Colonic mucosa (tissue), 4 donors: ENCODE measurements at regions of chr2 and their contacts with region 1.

Region 1: GRCh38 chr2:39513641-39514094 is 76.6 kb upstream of the MAP4K3 start:
- DNase-seq: peak; percentile 67
- H3K4me3 ChIP-seq: no peak overlapping the region
- H3K27ac ChIP-seq: peak overlapping the region; percentile 4
- H3K4me1 ChIP-seq: no peaks in the 10 kb centered on the region
- H3K27me3 ChIP-seq: no peaks in the 10 kb centered on the region
- CTCF ChIP-seq: peak; percentile 32

Region 2: GRCh38 chr2:39350658-39351057 is 163.0 kb before region 1 on chr2:
- intact Hi-C with region 1: no loop called
- DNase-seq: no peak
- H3K4me3 ChIP-seq: no peak overlapping the region
- H3K27ac ChIP-seq: no peak overlapping the region
- H3K4me1 ChIP-seq: no peaks in the 10 kb centered on the region
- H3K27me3 ChIP-seq: no peaks in the 10 kb centered on the region
- CTCF ChIP-seq: no peak

Region 3: GRCh38 chr2:39436592-39437510 is 76.8 kb before region 1 on chr2 and contains the start of gene MAP4K3:
- intact Hi-C with region 1: loop called (anchors 10 kb)
- DNase-seq: peak; percentile 95
- H3K4me3 ChIP-seq: peak within 1 kb of the TSS; percentile 84
- H3K27ac ChIP-seq: peak within 1 kb of the TSS; percentile 92
- H3K4me1 ChIP-seq: no peaks in the 10 kb centered on the region
- H3K27me3 ChIP-seq: no peaks in the 10 kb centered on the region
- CTCF ChIP-seq: no peak
- total RNA-seq, gene MAP4K3: 22.2 to 30.9 TPM

Region 4: GRCh38 chr2:39728941-39729351 is 215.3 kb after region 1 on chr2:
- intact Hi-C with region 1: loop called (anchors 5 kb)
- DNase-seq: no peak
- H3K4me3 ChIP-seq: no peak overlapping the region
- H3K27ac ChIP-seq: no peak overlapping the region
- H3K4me1 ChIP-seq: no peaks in the 10 kb centered on the region
- H3K27me3 ChIP-seq: no peaks in the 10 kb centered on the region
- CTCF ChIP-seq: peak; percentile 59